ENCODE measurements at regions of chr9 and their contacts with region 1.

Region 1: GRCh38 chr9:100011062-100011681 is 87.6 kb downstream of the ERP44 start:
- DNase-seq: no peak
- ATAC-seq: no peak
- H3K4me3 ChIP-seq: no peak overlapping the region
- H3K27ac ChIP-seq: no peak overlapping the region
- H3K4me1 ChIP-seq: no peaks in the 10 kb centered on the region
- H3K27me3 ChIP-seq: no peaks in the 10 kb centered on the region
- CTCF ChIP-seq: peak; percentile 64; the same call in 1 of the 2 replicates

Region 2: DNA sequence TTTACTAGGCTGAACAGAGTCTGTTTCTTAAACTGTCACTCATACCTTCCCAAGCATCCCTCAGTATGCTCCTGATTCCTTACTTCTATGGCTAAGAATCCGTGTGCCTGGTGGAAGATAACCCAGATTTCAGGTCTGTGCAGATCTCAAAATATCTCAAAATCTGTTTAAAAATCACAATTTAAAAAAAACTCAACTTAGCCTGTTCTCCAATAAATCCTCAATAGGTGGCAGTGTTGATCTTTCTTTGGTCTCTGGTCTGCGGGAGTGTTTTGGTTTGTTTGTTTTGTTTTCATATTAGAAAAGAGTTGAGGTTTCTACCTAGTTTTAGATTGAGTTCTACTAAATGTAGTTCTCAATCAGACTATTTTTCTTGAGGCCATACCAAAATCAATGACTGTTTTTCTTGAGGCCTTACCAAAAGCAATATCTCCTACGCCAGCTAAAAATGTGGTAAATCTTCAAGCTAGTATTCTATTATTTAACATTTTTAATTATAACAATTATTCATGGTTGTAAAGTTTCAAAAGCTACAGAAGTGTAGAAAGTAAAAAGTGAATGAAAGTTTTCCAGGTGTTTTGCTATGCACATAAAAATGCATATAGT is 848.3 kb before region 1 on chr9:
- CTCF ChIA-PET with region 1: no interaction called
- POLR2A ChIA-PET with region 1: no interaction called
- in situ Hi-C with region 1: no loop called
- intact Hi-C with region 1: loop called (anchors 5 kb)
- DNase-seq: no peak
- ATAC-seq: no peak
- H3K4me3 ChIP-seq: no peak overlapping the region
- H3K27ac ChIP-seq: no peak overlapping the region
- H3K4me1 ChIP-seq: no peaks in the 10 kb centered on the region
- H3K27me3 ChIP-seq: no peaks in the 10 kb centered on the region
- CTCF ChIP-seq: peak; percentile 56; the same call in 1 of the 2 replicates

Region 3: DNA sequence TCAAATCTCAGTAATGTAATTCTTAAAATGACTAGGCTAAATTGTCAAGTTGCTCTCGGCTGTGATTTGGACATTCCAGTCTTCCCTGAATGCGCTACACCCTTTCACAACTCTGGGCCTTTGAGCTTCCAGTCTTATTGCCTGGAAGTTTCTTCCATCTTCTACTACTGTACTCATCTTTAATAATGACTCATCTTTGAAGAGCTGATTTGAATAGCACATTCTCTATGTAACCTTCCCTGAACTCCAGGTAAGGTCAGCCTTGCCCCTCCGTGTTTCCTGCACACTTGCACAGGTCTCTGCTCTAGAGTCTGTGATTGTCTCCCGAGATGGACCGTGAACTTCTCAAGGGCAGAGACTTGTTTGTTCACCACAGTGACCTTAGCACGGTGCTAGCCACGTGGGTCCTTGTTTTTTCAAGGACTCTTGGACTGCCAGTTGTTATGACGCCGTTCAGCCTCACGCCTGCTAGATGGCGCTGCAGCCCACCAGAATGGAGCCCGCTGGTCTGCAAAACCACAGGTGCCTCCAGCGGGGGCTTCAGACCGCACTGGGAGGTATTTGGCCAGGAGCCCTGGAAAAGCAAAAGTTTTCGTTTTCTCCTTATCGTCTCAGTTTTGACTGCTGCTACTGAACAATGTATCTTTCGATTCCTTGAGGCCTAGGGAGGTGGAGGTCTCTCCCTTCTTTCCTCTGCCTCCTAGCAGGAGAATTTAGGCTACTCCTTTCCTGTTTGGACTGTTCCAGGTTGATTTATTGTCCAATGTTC is 744.7 kb before region 1 on chr9:
- CTCF ChIA-PET with region 1: no interaction called
- POLR2A ChIA-PET with region 1: no interaction called
- in situ Hi-C with region 1: no loop called
- intact Hi-C with region 1: loop called (anchors 10 kb)
- DNase-seq: peak; percentile 42
- ATAC-seq: peak; percentile 63; the same call in 1 of the 2 replicates
- H3K4me3 ChIP-seq: no peak overlapping the region
- H3K27ac ChIP-seq: no peak overlapping the region
- H3K4me1 ChIP-seq: no peaks in the 10 kb centered on the region
- H3K27me3 ChIP-seq: no peaks in the 10 kb centered on the region; the same call in none of the 2 replicates
- CTCF ChIP-seq: peak; percentile 77

Region 4: GRCh38 chr9:99819856-99820684 is 191.1 kb before region 1 on chr9:
- CTCF ChIA-PET with region 1: no interaction called
- POLR2A ChIA-PET with region 1: no interaction called
- in situ Hi-C with region 1: no loop called
- intact Hi-C with region 1: loop called (anchors 5 kb)
- DNase-seq: no peak
- ATAC-seq: peak; percentile 76
- H3K4me3 ChIP-seq: peak overlapping the region; percentile 56 to 88
- H3K27ac ChIP-seq: no peak overlapping the region; the same call in 1 of the 2 replicates
- H3K4me1 ChIP-seq: no peaks in the 10 kb centered on the region
- H3K27me3 ChIP-seq: no peaks in the 10 kb centered on the region
- CTCF ChIP-seq: peak; percentile 16; the same call in 1 of the 2 replicates

Region 5: DNA sequence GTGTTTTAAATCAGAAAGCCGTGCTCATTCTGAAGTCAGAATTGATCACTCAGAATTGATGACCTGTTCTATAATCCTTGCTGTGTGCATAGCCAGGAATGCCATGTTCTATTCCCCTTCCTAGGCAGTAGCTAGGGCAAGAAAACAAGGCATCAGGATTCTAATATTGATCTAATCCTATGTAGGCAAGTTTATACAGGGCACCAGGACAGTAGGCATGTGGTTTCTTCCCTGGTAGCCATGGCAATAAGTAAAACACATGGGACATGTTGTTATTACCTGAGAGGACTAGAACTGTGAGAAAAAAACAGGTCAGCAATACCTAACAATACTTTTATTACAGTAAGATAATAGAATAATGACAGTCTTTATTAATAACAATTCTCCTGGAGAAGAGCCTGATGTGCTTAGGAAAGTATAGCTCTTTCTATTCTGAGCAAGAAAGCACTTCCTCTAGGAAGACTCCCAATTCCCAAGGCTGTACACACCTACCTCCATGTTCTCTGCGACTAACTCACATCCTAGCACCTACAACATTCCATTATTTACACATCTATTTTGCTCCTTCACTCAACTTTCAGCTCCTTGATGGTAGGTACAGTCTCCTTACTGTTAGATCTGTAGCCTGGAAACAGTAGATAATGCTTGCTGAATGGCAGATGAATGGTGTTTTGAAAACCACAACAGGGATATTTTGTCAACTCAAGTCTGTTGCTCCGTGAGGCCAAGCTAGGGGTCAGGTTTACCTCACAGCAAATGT is 34.0 kb before region 1 on chr9:
- CTCF ChIA-PET with region 1: no interaction called
- POLR2A ChIA-PET with region 1: no interaction called
- in situ Hi-C with region 1: no loop called
- intact Hi-C with region 1: no loop called
- DNase-seq: no peak
- ATAC-seq: no peak
- H3K4me3 ChIP-seq: no peak overlapping the region
- H3K27ac ChIP-seq: no peak overlapping the region
- H3K4me1 ChIP-seq: no peaks in the 10 kb centered on the region
- H3K27me3 ChIP-seq: no peaks in the 10 kb centered on the region
- CTCF ChIP-seq: no peak

Region 6: DNA sequence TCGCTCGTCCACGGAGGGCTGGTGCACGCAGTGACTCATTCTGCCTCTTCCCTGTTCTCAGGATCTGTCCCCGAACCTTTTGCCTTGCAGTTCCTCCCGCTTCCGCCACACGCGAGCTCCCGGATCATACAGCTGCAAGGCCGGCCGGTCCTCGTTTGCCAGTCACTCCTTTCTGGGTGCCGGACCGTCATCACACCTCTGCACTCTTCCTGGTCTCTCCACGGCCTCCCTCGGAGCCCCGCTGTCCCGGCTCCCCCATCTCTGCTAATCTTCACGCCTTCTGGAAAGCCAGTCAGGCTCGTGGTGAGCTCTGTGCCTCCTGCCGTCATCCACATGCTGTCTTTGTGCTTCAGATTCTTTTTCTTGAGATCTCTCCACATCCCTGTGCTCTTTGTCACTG is 12.9 kb before region 1 on chr9:
- CTCF ChIA-PET with region 1: no interaction called
- POLR2A ChIA-PET with region 1: no interaction called
- in situ Hi-C with region 1: no loop called
- intact Hi-C with region 1: no loop called
- DNase-seq: no peak
- ATAC-seq: no peak
- H3K4me3 ChIP-seq: no peak overlapping the region
- H3K27ac ChIP-seq: no peak overlapping the region
- H3K4me1 ChIP-seq: no peaks in the 10 kb centered on the region
- H3K27me3 ChIP-seq: no peaks in the 10 kb centered on the region
- CTCF ChIP-seq: no peak

Region 7: DNA sequence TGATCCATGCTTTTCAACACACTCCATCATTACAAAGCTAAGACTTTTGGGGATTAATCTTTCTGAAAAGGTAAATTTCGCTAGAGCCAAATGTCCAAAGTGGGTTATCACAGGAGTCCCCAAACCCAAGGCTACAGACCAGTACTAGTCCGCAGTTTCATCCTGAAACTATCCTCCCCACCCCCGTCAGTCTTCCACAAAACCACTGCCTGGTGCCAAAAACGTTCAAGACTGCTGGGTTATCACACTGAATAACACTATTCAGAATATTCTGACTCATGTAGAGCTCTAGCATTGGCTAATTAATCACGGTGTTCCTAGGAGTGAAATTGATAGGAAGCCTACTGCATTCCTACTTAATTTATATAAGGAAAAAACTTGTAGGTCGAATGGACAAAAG is 62.9 kb after region 1 on chr9:
- CTCF ChIA-PET with region 1: no interaction called
- POLR2A ChIA-PET with region 1: no interaction called
- in situ Hi-C with region 1: no loop called
- intact Hi-C with region 1: no loop called
- DNase-seq: no peak
- ATAC-seq: no peak
- H3K4me3 ChIP-seq: no peak overlapping the region
- H3K27ac ChIP-seq: no peak overlapping the region
- H3K4me1 ChIP-seq: no peaks in the 10 kb centered on the region
- H3K27me3 ChIP-seq: no peaks in the 10 kb centered on the region
- CTCF ChIP-seq: no peak

Region 8: DNA sequence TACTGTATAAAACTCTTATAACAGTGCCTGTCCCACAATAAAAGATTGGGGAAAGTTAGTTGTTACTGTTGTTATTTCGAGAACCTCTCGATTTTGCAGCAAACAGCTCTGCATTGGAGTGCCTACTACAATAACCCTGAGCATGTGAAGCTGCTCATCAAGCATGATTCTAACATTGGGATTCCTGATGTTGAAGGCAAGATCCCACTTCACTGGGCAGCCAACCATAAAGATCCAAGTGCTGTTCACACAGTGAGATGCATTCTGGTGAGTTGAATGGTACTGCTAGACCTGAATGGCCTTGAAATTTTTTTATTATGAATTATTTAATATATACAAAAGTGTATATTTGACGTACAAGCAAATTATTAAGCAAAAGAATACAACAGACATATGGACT is 218.4 kb after region 1 on chr9:
- CTCF ChIA-PET with region 1: no interaction called
- POLR2A ChIA-PET with region 1: no interaction called
- in situ Hi-C with region 1: no loop called
- intact Hi-C with region 1: no loop called
- DNase-seq: no peak
- ATAC-seq: no peak
- H3K4me3 ChIP-seq: no peak overlapping the region
- H3K27ac ChIP-seq: no peak overlapping the region
- H3K4me1 ChIP-seq: no peaks in the 10 kb centered on the region
- H3K27me3 ChIP-seq: no peaks in the 10 kb centered on the region
- CTCF ChIP-seq: no peak